CD8-positive, alpha-beta T cell (primary cell): ENCODE measurements at regions of chr2 and their contacts with region 1.

Region 1: DNA sequence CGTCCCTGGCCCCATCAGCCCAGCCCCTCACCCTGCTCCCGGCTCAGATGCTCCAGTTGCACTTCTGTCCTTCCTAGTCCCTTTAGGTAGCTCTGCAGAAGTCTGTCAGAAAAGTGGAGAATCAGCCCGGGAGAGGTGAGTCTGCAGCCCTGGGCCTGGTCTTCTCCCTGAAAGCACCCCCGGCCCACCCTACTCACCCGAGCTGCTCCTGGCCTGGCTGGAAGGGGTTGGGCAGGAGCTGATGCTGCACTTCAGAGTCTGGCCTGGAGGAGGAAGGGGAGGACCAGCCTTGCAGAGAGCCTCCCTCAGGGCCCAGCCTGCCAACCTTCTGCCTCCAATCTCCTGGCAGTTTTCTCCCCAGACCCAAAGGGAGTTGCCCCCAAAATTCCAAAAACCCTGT is 15.8 kb downstream of the KHK start:
- DNase-seq: no peak
- ATAC-seq: no peak
- H3K4me3 ChIP-seq: no peak overlapping the region
- H3K4me3 Mint-ChIP-seq: no peak overlapping the region
- H3K27ac ChIP-seq: no peak overlapping the region
- H3K27ac Mint-ChIP-seq: no peak overlapping the region
- H3K4me1 ChIP-seq: no peaks in the 10 kb centered on the region
- H3K4me1 Mint-ChIP-seq: no peaks in the 10 kb centered on the region
- H3K27me3 ChIP-seq: peaks cover 0 to 3% of the 10 kb centered on the region in 2 experiments
- H3K27me3 Mint-ChIP-seq: peaks cover 16% of the 10 kb centered on the region
- CTCF ChIP-seq: no peak

Region 2: DNA sequence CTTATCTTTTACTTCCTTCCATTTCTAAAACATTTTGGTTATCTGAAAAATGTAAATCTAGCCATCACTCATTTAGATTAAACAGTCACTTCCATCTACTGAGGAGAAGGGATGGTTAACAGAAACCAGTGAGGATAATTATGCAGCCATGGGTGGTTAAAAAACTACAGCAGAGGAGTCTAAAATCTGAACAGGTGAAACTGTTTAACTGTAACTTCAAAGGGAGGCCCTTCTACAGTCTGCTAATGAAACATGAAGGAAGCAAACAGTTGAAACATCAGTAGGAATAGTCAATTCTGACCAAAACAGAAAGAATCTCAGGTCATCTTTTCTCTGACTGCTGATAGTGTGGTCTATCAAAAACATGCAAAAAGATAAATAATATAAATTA is 1500.0 kb before region 1 on chr2:
- CTCF ChIA-PET with region 1: no interaction called
- POLR2A ChIA-PET with region 1: no interaction called
- intact Hi-C with region 1: no loop called
- DNase-seq: no peak
- ATAC-seq: no peak
- H3K4me3 ChIP-seq: no peak overlapping the region
- H3K4me3 Mint-ChIP-seq: no peak overlapping the region
- H3K27ac ChIP-seq: no peak overlapping the region
- H3K27ac Mint-ChIP-seq: no peak overlapping the region
- H3K4me1 ChIP-seq: no peaks in the 10 kb centered on the region
- H3K4me1 Mint-ChIP-seq: peaks cover 2% of the 10 kb centered on the region
- H3K27me3 ChIP-seq: no peaks in the 10 kb centered on the region
- H3K27me3 Mint-ChIP-seq: no peaks in the 10 kb centered on the region
- CTCF ChIP-seq: no peak

Region 3: DNA sequence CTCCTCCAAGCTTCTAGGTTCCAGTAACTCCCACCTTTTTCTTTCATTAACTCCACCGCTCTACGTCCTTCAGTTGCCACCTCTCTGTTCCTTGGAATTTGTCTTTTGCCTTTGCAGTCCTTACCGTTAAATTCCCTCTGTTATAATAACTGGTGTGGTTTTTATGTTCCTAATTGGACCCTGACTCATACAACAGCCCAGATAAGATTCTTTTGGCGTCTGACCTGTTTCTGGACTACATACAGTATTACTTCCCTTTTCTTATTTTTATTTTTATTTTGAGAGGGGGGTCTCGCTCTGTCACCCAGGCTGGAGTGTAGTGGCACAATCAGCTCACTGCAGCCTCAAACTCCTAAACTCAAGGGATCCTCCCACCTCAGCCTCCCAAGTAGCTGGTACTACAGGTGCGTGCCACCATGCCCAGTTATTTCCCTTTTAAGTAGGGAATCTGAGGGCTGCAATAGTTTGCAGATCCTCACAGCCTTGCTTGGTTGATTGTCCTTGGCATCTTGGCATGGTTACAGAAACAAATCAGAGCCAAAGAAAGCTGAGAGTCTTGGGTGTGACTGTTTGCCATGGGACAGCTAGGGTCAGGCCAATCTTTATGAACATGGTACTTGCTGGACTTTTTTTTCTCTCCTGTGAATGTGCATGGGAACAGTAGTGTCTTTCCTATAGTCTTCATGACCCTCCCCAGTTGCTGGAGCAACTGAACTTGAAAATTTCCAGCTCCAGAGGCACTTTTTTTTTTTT is 68.4 kb after region 1 on chr2:
- CTCF ChIA-PET with region 1: interaction called, 11 read pairs
- POLR2A ChIA-PET with region 1: no interaction called
- intact Hi-C with region 1: no loop called
- DNase-seq: no peak
- ATAC-seq: no peak
- H3K4me3 ChIP-seq: no peak overlapping the region
- H3K4me3 Mint-ChIP-seq: no peak overlapping the region
- H3K27ac ChIP-seq: no peak overlapping the region
- H3K27ac Mint-ChIP-seq: no peak overlapping the region
- H3K4me1 ChIP-seq: peaks cover 5% of the 10 kb centered on the region
- H3K4me1 Mint-ChIP-seq: peaks cover 11% of the 10 kb centered on the region
- H3K27me3 ChIP-seq: peaks cover 0 to 5% of the 10 kb centered on the region in 2 experiments
- H3K27me3 Mint-ChIP-seq: peaks cover 9% of the 10 kb centered on the region
- CTCF ChIP-seq: no peak

Region 4: GRCh38 chr2:27255660-27256059 is 153.3 kb after region 1 on chr2:
- CTCF ChIA-PET with region 1: no interaction called
- POLR2A ChIA-PET with region 1: no interaction called
- intact Hi-C with region 1: no loop called
- DNase-seq: no peak
- ATAC-seq: no peak
- H3K4me3 ChIP-seq: no peak overlapping the region
- H3K4me3 Mint-ChIP-seq: no peak overlapping the region
- H3K27ac ChIP-seq: no peak overlapping the region
- H3K27ac Mint-ChIP-seq: no peak overlapping the region
- H3K4me1 ChIP-seq: no peaks in the 10 kb centered on the region
- H3K4me1 Mint-ChIP-seq: no peaks in the 10 kb centered on the region
- H3K27me3 ChIP-seq: peaks cover 7 to 13% of the 10 kb centered on the region in 2 experiments
- H3K27me3 Mint-ChIP-seq: peaks cover 57% of the 10 kb centered on the region
- CTCF ChIP-seq: no peak

Region 5: GRCh38 chr2:27573452-27573851 is 471.1 kb after region 1 on chr2:
- CTCF ChIA-PET with region 1: no interaction called
- POLR2A ChIA-PET with region 1: no interaction called
- intact Hi-C with region 1: no loop called
- DNase-seq: no peak
- ATAC-seq: no peak
- H3K4me3 ChIP-seq: no peak overlapping the region
- H3K4me3 Mint-ChIP-seq: no peak overlapping the region
- H3K27ac ChIP-seq: no peak overlapping the region
- H3K27ac Mint-ChIP-seq: no peak overlapping the region
- H3K4me1 ChIP-seq: no peaks in the 10 kb centered on the region
- H3K4me1 Mint-ChIP-seq: peaks cover 6% of the 10 kb centered on the region
- H3K27me3 ChIP-seq: no peaks in the 10 kb centered on the region
- H3K27me3 Mint-ChIP-seq: peaks cover 9% of the 10 kb centered on the region
- CTCF ChIP-seq: no peak